ENCODE measurements at regions of chr1 and their contacts with region 1.

Region 1: DNA sequence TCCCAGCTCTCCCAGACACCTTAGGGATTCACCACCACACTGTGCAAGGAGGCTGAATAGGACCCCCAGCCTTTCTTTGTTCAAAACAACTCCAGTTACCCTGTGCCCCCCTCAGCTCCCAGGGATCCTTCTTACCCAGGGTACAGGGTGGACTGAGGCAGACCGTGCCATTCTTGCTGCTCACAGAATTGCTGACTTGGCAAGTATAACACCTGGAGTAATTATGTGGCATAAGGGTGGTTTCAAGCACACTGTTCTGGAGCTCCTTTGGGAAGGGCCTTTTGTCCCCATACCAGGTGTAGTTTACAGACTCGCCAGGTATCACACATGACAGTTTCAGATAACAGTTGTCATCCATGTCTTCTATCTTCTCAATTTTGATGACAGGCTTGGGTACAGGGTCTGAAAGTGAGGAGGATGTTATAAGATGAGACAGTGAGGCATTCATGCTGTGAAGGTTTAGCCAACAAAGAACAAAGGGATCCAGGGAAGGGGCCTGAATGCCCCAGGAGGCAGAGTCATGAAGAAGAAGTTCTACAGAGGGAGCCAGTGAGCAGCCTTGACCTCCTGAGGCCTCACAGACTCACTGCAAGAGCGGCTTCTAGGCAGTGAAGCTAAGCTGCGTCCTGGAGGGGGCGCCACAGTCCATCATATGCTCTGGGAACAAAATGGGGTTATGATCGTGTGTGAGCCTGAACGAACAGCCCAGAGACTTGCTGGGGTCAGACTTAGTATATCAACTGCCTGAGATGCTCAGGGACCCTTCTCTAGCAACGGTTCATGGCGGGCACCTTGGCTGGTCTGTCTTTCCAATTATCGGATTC is 30.3 kb downstream of the CD48 start:
- DNase-seq: peak; percentile 75 to 93 (median 91)
- ATAC-seq: peak; percentile 91
- H3K4me3 ChIP-seq: no peak overlapping the region
- H3K4me3 Mint-ChIP-seq: no peak overlapping the region
- H3K27ac ChIP-seq: peak overlapping the region; percentile 1 to 71
- H3K27ac Mint-ChIP-seq: peak overlapping the region; percentile 85
- H3K4me1 ChIP-seq: peaks cover 52% of the 10 kb centered on the region
- H3K4me1 Mint-ChIP-seq: peaks cover 54% of the 10 kb centered on the region
- H3K27me3 ChIP-seq: no peaks in the 10 kb centered on the region
- H3K27me3 Mint-ChIP-seq: no peaks in the 10 kb centered on the region
- CTCF ChIP-seq: peak; percentile 82

Region 2: DNA sequence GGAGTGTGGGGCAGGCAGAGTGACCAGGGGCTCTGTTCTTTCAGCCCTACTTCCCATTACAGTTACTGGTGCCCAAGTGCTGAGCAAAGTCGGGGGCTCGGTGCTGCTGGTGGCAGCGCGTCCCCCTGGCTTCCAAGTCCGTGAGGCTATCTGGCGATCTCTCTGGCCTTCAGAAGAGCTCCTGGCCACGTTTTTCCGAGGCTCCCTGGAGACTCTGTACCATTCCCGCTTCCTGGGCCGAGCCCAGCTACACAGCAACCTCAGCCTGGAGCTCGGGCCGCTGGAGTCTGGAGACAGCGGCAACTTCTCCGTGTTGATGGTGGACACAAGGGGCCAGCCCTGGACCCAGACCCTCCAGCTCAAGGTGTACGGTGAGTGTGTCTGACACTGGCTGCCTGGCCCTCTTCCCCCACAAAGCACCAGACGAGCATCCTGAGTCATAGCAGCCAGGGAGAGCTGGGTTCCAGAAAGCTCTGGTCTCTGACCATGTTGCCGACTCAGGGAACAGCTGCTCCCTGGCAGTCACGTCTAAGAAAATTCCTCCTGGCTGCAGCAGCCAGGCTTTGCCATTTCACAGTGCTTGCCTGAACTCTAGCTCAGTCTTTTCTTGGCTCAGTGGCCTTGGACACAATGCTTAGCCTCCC is 851.3 kb before region 1 on chr1:
- CTCF ChIA-PET with region 1: no interaction called
- POLR2A ChIA-PET with region 1: no interaction called
- intact Hi-C with region 1: no loop called
- DNase-seq: no peak
- ATAC-seq: no peak
- H3K4me3 ChIP-seq: no peak overlapping the region
- H3K4me3 Mint-ChIP-seq: no peak overlapping the region
- H3K27ac ChIP-seq: no peak overlapping the region
- H3K27ac Mint-ChIP-seq: no peak overlapping the region
- H3K4me1 ChIP-seq: peaks cover 42% of the 10 kb centered on the region
- H3K4me1 Mint-ChIP-seq: peaks cover 49% of the 10 kb centered on the region
- H3K27me3 ChIP-seq: no peaks in the 10 kb centered on the region
- H3K27me3 Mint-ChIP-seq: no peaks in the 10 kb centered on the region
- CTCF ChIP-seq: no peak

Region 3: GRCh38 chr1:160629286-160630210 is 51.7 kb before region 1 on chr1:
- CTCF ChIA-PET with region 1: interaction called, 75 read pairs
- POLR2A ChIA-PET with region 1: interaction called, 7 read pairs
- intact Hi-C with region 1: no loop called
- DNase-seq: peak; percentile 53 to 92 (median 75)
- ATAC-seq: peak; percentile 81
- H3K4me3 ChIP-seq: peak overlapping the region; percentile 19 to 38
- H3K4me3 Mint-ChIP-seq: peak overlapping the region; percentile 76
- H3K27ac ChIP-seq: peak overlapping the region; percentile 91 to 95
- H3K27ac Mint-ChIP-seq: peak overlapping the region; percentile 97
- H3K4me1 ChIP-seq: peaks cover 91% of the 10 kb centered on the region
- H3K4me1 Mint-ChIP-seq: peaks cover 99% of the 10 kb centered on the region
- H3K27me3 ChIP-seq: no peaks in the 10 kb centered on the region
- H3K27me3 Mint-ChIP-seq: no peaks in the 10 kb centered on the region
- CTCF ChIP-seq: no peak

Region 4: DNA sequence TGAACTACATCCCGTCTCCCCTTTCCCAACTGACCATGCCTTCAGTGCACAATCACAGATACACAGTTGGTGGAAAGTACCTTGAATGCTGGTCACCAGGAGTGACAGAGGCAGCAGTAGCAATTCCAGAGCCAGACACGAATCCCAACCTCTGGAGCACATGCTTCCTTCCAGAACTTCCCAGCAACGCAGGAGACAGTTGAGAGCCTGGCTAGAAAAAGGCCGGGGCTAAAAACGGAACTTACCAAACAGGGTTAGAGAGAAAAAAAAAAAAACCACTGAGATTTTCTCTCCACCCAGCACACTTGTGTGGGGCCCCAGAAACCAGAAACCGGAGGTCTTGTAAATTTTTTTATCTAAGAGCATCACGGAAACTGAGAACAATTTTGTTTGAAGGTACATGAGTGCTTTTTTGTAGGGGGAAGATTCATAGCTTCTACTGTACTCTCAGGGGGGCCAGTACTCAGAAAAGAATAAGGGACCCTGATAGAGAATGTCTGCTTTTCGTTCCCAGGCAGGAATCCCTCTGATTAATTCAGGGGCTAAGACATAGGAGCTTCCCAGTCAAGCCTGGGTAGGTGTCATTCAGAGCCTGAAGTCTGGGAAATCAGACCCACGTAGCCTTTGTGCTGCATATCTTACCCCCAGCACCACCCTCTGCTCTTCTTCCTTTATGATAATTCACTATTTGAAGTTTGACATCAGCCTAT is 30.5 kb after region 1 on chr1 and contains the start of gene CD48:
- CTCF ChIA-PET with region 1: interaction called, 87 read pairs
- POLR2A ChIA-PET with region 1: interaction called, 11 read pairs
- intact Hi-C with region 1: loop called (anchors 1 to 2 kb)
- DNase-seq: peak in 7 of 9 experiments; percentile 37 to 89 (median 67)
- ATAC-seq: peak; percentile 32
- H3K4me3 ChIP-seq: peak within 1 kb of the TSS; percentile 84 to 89
- H3K4me3 Mint-ChIP-seq: no peak within 1 kb of the TSS
- H3K27ac ChIP-seq: peak within 1 kb of the TSS; percentile 76 to 93
- H3K27ac Mint-ChIP-seq: no peak within 1 kb of the TSS
- H3K4me1 ChIP-seq: peaks cover 58% of the 10 kb centered on the region
- H3K4me1 Mint-ChIP-seq: peaks cover 46% of the 10 kb centered on the region
- H3K27me3 ChIP-seq: no peaks in the 10 kb centered on the region
- H3K27me3 Mint-ChIP-seq: no peaks in the 10 kb centered on the region
- CTCF ChIP-seq: no peak
- total RNA-seq, gene CD48: 397 to 399 TPM

Region 5: GRCh38 chr1:160777486-160778089 is 96.3 kb after region 1 on chr1:
- CTCF ChIA-PET with region 1: interaction called, 22 read pairs
- POLR2A ChIA-PET with region 1: no interaction called
- intact Hi-C with region 1: no loop called
- DNase-seq: peak in 7 of 9 experiments; percentile 33 to 79 (median 52)
- ATAC-seq: peak; percentile 84
- H3K4me3 ChIP-seq: no peak overlapping the region
- H3K4me3 Mint-ChIP-seq: no peak overlapping the region
- H3K27ac ChIP-seq: no peak overlapping the region
- H3K27ac Mint-ChIP-seq: no peak overlapping the region
- H3K4me1 ChIP-seq: no peaks in the 10 kb centered on the region
- H3K4me1 Mint-ChIP-seq: peaks cover 20% of the 10 kb centered on the region
- H3K27me3 ChIP-seq: no peaks in the 10 kb centered on the region
- H3K27me3 Mint-ChIP-seq: no peaks in the 10 kb centered on the region
- CTCF ChIP-seq: peak; percentile 77

Region 6: GRCh38 chr1:160830321-160831153 is 149.3 kb after region 1 on chr1:
- CTCF ChIA-PET with region 1: interaction called, 13 read pairs
- POLR2A ChIA-PET with region 1: no interaction called
- intact Hi-C with region 1: loop called (anchors 1 kb)
- DNase-seq: peak; percentile 52 to 87 (median 80)
- ATAC-seq: peak; percentile 70
- H3K4me3 ChIP-seq: no peak overlapping the region
- H3K4me3 Mint-ChIP-seq: no peak overlapping the region
- H3K27ac ChIP-seq: peak overlapping the region in 1 of 2 experiments; percentile 15
- H3K27ac Mint-ChIP-seq: peak overlapping the region; percentile 86
- H3K4me1 ChIP-seq: peaks cover 25% of the 10 kb centered on the region
- H3K4me1 Mint-ChIP-seq: peaks cover 58% of the 10 kb centered on the region
- H3K27me3 ChIP-seq: no peaks in the 10 kb centered on the region
- H3K27me3 Mint-ChIP-seq: no peaks in the 10 kb centered on the region
- CTCF ChIP-seq: peak; percentile 73

Measured in CD8-positive, alpha-beta T cell (primary cell).